HepG2 (cell line): ENCODE measurements at regions of chr7 and their contacts with region 1.

Region 1: GRCh38 chr7:149060156-149060555 is 30.4 kb downstream of the ZNF786 start:
- DNase-seq: no peak
- ATAC-seq: no peak
- H3K4me3 ChIP-seq: no peak overlapping the region
- H3K27ac ChIP-seq: no peak overlapping the region
- H3K4me1 ChIP-seq: peaks cover 7% of the 10 kb centered on the region; the same call in 1 of the 2 replicates
- H3K27me3 ChIP-seq: no peaks in the 10 kb centered on the region
- CTCF ChIP-seq: no peak
- EP300 ChIP-seq: no peak
- POLR2A ChIP-seq: no peak
- RAD21 ChIP-seq: no peak

Region 2: DNA sequence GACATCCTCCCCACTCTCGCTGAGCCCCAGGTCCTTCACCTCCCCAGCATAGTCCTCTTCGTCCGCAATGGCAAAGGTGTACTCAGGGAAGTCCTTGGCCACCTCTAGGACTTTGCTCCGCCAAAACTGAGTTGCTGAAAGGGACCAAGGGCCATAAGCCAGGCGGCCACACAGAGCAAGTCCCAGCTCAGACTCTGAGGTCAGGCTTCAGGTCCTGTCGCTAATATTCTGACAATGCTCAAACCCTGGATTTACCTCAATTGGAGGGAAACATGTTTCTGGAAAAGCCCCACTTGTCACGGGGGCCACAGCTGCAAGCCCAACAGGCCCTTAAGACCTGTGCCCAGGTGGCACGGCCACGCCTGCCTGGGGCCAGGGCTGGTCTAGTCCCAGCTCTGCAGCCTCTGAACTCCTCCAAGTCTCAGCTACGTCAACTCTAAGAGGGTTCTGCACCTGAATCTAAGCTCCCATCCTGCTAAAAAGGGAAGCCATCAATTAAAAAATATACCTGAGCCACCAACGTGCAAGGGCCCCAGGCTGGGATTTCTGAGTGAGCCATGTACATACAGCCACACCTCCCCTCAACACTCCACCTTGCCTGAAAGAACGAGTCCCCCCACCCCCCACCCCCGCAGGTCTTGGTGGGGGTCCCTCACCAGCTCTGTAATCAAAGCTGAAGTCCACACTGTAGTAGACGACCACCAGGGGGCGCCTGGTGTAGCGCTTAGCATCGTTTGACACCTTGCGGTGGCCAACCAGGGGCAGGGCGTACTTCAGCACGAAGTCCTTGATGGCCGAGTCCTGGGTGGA is 54.7 kb before region 1 on chr7:
- CTCF ChIA-PET with region 1: interaction called, 18 read pairs
- POLR2A ChIA-PET with region 1: no interaction called
- in situ Hi-C with region 1: loop called (anchors 5 kb)
- intact Hi-C with region 1: loop called (anchors 1 kb)
- DNase-seq: peak; percentile 62
- ATAC-seq: peak; percentile 76
- H3K4me3 ChIP-seq: no peak overlapping the region
- H3K27ac ChIP-seq: no peak overlapping the region
- H3K4me1 ChIP-seq: peaks cover 6% of the 10 kb centered on the region; the same call in 1 of the 2 replicates
- H3K27me3 ChIP-seq: no peaks in the 10 kb centered on the region
- CTCF ChIP-seq: peak; percentile 80
- EP300 ChIP-seq: no peak
- POLR2A ChIP-seq: no peak
- RAD21 ChIP-seq: peak; percentile 39; the same call in 1 of the 2 replicates

Region 3: DNA sequence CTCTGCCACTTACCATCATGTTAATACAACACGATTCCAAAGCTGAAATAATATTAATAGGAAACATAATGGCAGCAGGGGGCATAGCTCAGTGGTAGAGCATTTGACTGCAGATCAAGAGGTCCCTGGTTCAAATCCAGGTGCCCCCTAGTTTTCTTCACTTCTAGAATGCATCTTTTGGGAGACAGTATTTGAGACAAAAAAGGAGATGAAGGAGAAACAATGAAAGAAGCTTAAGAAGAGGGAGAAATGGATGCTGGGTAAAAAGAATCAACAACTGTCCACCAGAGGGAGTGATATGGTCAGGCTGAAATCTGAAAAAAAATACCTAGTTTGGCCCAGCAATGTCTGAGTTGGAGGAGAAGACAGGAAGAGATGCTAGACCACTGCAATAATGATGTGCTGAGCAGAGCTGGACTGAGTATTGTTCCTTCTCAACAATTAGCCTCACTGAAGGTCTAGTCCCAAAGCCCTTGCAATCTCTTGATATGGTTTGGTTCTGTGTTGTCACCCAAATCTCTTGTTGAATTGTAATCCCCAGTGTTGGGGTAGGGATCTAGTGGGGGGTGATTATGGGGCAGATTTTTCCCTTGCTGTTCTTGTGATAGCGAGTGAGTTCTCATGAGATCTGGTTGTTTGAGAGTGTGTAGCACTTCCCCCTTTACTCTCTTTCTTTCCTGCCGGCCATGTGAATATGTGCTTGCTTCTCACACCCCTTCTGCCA is 250.1 kb after region 1 on chr7:
- CTCF ChIA-PET with region 1: no interaction called
- POLR2A ChIA-PET with region 1: no interaction called
- in situ Hi-C with region 1: no loop called
- intact Hi-C with region 1: no loop called
- DNase-seq: peak; percentile 53
- ATAC-seq: peak; percentile 73
- H3K4me3 ChIP-seq: no peak overlapping the region
- H3K27ac ChIP-seq: no peak overlapping the region
- H3K4me1 ChIP-seq: no peaks in the 10 kb centered on the region
- H3K27me3 ChIP-seq: peaks cover 0 to 5% of the 10 kb centered on the region in 2 experiments; a peak in 1 of 5 replicates
- CTCF ChIP-seq: peak; percentile 64
- EP300 ChIP-seq: no peak
- POLR2A ChIP-seq: no peak
- RAD21 ChIP-seq: peak; percentile 55